OCI-LY7 (cell line): ENCODE measurements at regions of chr19 and their contacts with region 1.

Region 1: DNA sequence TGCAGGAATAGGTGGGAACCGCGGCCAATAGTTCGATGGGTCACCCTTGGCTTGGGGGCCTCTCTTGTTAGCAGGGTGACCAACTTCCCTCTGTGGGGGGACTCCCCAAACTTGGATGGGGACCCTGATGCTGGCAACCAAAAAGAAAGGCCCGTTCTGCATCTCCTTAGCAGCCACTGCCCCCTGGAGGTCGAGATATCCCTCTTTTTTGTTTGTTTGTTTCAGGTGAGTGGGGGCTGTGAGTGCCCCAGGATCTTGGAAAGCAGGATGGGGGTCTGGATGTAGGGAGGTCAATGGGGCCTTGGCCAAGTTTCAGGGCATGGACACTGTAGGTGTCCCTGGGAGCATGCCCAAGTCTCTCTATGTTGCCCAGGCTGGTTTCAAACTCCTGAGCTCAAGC is 7.7 kb upstream of the CRTC1 start:
- DNase-seq: peak; percentile 48
- H3K4me3 ChIP-seq: no peak overlapping the region
- H3K27ac ChIP-seq: no peak overlapping the region
- H3K4me1 ChIP-seq: no peaks in the 10 kb centered on the region
- CTCF ChIP-seq: peak; percentile 81

Region 2: DNA sequence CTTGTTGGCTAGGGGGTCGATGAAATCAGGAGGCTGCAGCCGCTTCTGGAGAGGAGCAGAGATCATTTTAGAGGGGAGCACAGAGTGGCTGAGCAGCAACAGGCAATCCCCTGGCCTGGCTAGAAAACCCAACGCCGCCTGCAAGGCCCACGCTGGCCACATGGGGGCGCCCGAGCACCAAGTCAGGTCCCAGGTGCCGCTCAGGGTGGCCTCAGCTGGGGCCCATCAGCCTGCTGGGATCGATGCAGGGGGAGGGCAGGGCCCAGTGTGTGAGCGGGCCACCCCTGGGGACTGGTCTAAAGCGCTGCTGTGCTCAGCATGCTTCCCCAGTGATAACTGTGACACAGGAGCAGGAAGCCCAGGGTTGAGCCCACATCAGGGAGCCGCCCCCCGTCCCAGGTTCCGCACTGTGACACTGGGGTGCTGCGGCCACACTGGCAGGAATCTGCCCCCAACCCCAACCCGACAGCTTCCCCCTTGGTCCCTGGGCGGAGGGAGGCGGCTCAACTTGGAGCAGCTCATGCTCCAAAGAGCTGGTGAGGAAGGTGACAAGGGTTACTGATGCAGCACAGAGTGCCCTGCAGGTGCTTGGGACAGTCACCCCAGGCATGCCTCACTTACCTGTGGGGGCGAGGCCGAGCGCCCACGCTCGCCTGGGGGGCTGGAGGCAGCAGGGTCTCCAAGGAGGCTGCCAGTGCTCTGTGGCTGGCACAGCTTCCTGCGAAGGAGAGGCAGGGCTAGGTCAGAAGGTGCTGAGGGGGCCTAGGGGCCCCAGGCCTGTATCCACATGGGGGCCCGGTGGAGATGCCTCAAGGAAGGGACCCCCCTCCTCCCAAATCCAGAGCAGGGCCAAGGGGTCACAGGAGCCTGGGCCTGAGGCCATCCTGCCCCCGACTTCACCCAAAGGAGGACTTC is 224.6 kb before region 1 on chr19:
- CTCF ChIA-PET with region 1: no interaction called
- POLR2A ChIA-PET with region 1: no interaction called
- intact Hi-C with region 1: loop called (anchors 5 kb)
- DNase-seq: peak; percentile 77
- H3K4me3 ChIP-seq: no peak overlapping the region
- H3K27ac ChIP-seq: no peak overlapping the region
- H3K4me1 ChIP-seq: no peaks in the 10 kb centered on the region
- CTCF ChIP-seq: peak; percentile 94

Region 3: GRCh38 chr19:18473003-18473705 is 202.6 kb before region 1 on chr19:
- CTCF ChIA-PET with region 1: no interaction called
- POLR2A ChIA-PET with region 1: no interaction called
- intact Hi-C with region 1: loop called (anchors 1 kb)
- DNase-seq: no peak
- H3K4me3 ChIP-seq: no peak overlapping the region
- H3K27ac ChIP-seq: no peak overlapping the region
- H3K4me1 ChIP-seq: peaks cover 3% of the 10 kb centered on the region
- CTCF ChIP-seq: no peak